ENCODE measurements at regions of chr6 and their contacts with region 1.

Region 1: GRCh38 chr6:36094753-36095496 is 35.4 kb upstream of the MAPK13 start:
- DNase-seq: peak; percentile 59 to 89 (median 82)
- ATAC-seq: peak; percentile 71
- H3K4me3 ChIP-seq: no peak overlapping the region
- H3K4me3 Mint-ChIP-seq: no peak overlapping the region
- H3K27ac ChIP-seq: peak overlapping the region in 1 of 2 experiments; percentile 42
- H3K27ac Mint-ChIP-seq: peak overlapping the region; percentile 67
- H3K4me1 ChIP-seq: peaks cover 27% of the 10 kb centered on the region
- H3K4me1 Mint-ChIP-seq: peaks cover 33% of the 10 kb centered on the region
- H3K27me3 ChIP-seq: no peaks in the 10 kb centered on the region
- H3K27me3 Mint-ChIP-seq: no peaks in the 10 kb centered on the region
- CTCF ChIP-seq: peak; percentile 98

Region 2: DNA sequence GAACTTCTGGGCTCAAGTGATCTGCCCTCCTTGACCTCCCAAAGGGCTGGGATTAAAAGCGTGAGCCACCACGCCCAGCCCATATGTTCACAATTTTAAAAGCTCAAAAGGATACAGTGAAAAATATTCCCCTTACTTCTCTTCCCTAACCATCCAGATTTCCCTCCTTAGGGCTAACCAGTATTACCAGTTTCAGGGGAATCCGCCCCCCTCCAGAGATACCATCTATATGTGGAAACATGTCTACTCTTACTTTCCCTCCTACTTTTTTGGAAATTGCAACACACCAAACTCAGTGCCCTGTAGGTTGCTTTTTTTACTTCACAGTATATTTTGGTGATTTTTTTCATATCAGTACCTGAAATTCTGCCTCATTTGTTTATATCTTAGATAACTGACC is 633.7 kb before region 1 on chr6:
- CTCF ChIA-PET with region 1: no interaction called
- POLR2A ChIA-PET with region 1: no interaction called
- intact Hi-C with region 1: no loop called
- DNase-seq: no peak
- ATAC-seq: no peak
- H3K4me3 ChIP-seq: no peak overlapping the region
- H3K4me3 Mint-ChIP-seq: no peak overlapping the region
- H3K27ac ChIP-seq: no peak overlapping the region
- H3K27ac Mint-ChIP-seq: no peak overlapping the region
- H3K4me1 ChIP-seq: no peaks in the 10 kb centered on the region
- H3K4me1 Mint-ChIP-seq: no peaks in the 10 kb centered on the region
- H3K27me3 ChIP-seq: no peaks in the 10 kb centered on the region
- H3K27me3 Mint-ChIP-seq: no peaks in the 10 kb centered on the region
- CTCF ChIP-seq: no peak

Region 3: DNA sequence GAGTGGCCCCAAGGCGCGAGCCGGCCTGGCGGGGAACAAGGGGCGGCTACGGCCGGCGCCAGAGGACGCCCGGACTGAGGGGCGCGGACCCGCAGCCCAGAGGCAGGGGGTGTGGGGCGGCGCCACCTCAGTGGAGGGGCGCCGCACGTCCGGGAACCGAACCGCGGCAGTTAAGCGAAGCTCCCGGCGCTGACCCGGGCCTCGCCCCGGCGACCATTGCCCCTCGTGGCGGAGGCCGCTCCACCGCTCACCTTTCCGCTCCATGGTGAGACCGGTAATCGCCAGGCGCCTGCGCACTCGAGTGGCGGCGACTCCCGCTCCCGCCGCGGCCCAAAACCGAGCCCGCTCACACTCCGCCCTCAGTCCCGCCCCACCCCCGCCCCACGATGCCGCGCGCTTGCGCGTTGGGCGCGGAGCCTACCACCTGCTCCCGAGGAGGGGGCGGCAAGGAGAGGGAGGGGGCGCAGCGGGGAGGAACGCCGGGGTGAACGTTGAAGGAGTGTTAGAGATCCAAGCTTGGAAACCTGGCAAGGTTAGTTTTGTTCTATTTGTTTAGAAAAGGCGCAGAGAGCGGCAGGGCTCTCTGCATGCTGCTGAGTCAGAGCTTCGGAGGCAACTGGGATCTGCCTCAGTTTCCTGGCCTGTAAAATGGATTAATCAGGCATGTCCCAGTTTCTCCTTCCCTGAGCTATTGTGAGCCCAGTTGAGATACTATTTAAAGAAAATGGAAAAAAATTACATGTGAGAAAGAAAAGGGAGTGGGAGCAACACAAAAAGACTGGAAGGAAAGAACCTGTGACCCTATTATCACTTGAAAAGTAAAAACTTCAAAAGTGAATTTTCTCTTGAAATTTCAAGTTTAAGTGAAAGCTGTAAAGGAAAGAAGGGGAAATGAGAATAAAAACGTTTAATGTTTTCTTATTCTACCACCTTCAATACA is 173.9 kb before region 1 on chr6 and contains the start of gene SRPK1:
- CTCF ChIA-PET with region 1: no interaction called
- POLR2A ChIA-PET with region 1: no interaction called
- intact Hi-C with region 1: loop called in 1 of 2 experiments (anchors 1 kb)
- DNase-seq: peak; percentile 66 to 90 (median 81)
- ATAC-seq: peak; percentile 76
- H3K4me3 ChIP-seq: peak within 1 kb of the TSS; percentile 63 to 67
- H3K4me3 Mint-ChIP-seq: peak within 1 kb of the TSS; percentile 96
- H3K27ac ChIP-seq: peak within 1 kb of the TSS; percentile 42 to 62
- H3K27ac Mint-ChIP-seq: peak within 1 kb of the TSS; percentile 93
- H3K4me1 ChIP-seq: peaks cover 19% of the 10 kb centered on the region
- H3K4me1 Mint-ChIP-seq: peaks cover 41% of the 10 kb centered on the region
- H3K27me3 ChIP-seq: no peaks in the 10 kb centered on the region
- H3K27me3 Mint-ChIP-seq: no peaks in the 10 kb centered on the region
- CTCF ChIP-seq: no peak
- total RNA-seq, gene SRPK1: 21.0 to 22.7 TPM

Region 4: DNA sequence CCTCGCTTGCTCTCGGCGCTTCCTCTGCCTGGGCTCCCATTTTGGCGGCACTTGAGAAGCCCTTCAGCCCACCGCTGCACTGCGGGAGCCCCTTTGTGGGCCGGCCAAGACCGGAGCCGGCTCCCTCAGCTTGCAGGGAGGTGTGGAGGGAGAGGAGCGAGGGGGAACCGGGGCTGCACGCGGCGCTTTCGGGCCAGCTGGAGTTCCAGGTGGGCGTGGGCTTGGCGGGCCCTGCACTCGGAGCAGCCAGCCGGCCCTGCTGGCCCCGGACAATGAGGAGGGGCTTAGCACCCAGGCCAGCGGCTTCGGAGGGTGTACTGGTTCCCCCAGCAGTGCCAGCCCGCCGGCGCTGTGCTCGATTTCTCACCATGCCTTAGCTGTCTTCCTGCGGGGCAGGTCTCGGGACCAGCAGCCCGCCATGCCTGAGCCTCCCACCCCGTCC is 163.8 kb before region 1 on chr6:
- CTCF ChIA-PET with region 1: no interaction called
- POLR2A ChIA-PET with region 1: no interaction called
- intact Hi-C with region 1: no loop called
- DNase-seq: no peak
- ATAC-seq: no peak
- H3K4me3 ChIP-seq: no peak overlapping the region
- H3K4me3 Mint-ChIP-seq: no peak overlapping the region
- H3K27ac ChIP-seq: no peak overlapping the region
- H3K27ac Mint-ChIP-seq: no peak overlapping the region
- H3K4me1 ChIP-seq: no peaks in the 10 kb centered on the region
- H3K4me1 Mint-ChIP-seq: peaks cover 2% of the 10 kb centered on the region
- H3K27me3 ChIP-seq: no peaks in the 10 kb centered on the region
- H3K27me3 Mint-ChIP-seq: no peaks in the 10 kb centered on the region
- CTCF ChIP-seq: no peak

Region 5: GRCh38 chr6:36075656-36076055 is 19.3 kb before region 1 on chr6:
- CTCF ChIA-PET with region 1: interaction called, 32 read pairs
- POLR2A ChIA-PET with region 1: interaction called, 3 read pairs
- intact Hi-C with region 1: loop called in 1 of 2 experiments (anchors 2 kb)
- DNase-seq: peak in 4 of 9 experiments; percentile 25 to 50 (median 36)
- ATAC-seq: peak; percentile 51
- H3K4me3 ChIP-seq: no peak overlapping the region
- H3K4me3 Mint-ChIP-seq: no peak overlapping the region
- H3K27ac ChIP-seq: no peak overlapping the region
- H3K27ac Mint-ChIP-seq: peak overlapping the region; percentile 52
- H3K4me1 ChIP-seq: no peaks in the 10 kb centered on the region
- H3K4me1 Mint-ChIP-seq: peaks cover 16% of the 10 kb centered on the region
- H3K27me3 ChIP-seq: no peaks in the 10 kb centered on the region
- H3K27me3 Mint-ChIP-seq: no peaks in the 10 kb centered on the region
- CTCF ChIP-seq: peak; percentile 45

Region 6: DNA sequence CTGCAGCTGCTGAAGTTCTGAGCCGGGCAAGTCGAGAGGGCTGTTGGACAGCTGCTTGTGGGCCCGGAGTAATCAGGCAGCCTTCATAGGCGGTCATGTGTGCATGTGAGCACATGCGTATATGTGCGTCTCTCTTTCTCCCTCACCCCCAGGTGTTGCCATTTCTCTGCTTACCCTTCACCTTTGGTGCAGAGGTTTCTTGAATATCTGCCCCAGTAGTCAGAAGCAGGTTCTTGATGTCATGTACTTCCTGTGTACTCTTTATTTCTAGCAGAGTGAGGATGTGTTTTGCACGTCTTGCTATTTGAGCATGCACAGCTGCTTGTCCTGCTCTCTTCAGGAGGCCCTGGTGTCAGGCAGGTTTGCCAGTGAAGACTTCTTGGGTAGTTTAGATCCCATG is 14.2 kb after region 1 on chr6:
- CTCF ChIA-PET with region 1: interaction called, 64 read pairs
- POLR2A ChIA-PET with region 1: interaction called, 20 read pairs
- intact Hi-C with region 1: loop called in 1 of 2 experiments (anchors 1 kb)
- DNase-seq: peak in 5 of 9 experiments; percentile 44 to 81 (median 66)
- ATAC-seq: peak; percentile 93
- H3K4me3 ChIP-seq: no peak overlapping the region
- H3K4me3 Mint-ChIP-seq: peak overlapping the region; percentile 8
- H3K27ac ChIP-seq: peak overlapping the region; percentile 59 to 60
- H3K27ac Mint-ChIP-seq: peak overlapping the region; percentile 95
- H3K4me1 ChIP-seq: peaks cover 53% of the 10 kb centered on the region
- H3K4me1 Mint-ChIP-seq: peaks cover 60% of the 10 kb centered on the region
- H3K27me3 ChIP-seq: no peaks in the 10 kb centered on the region
- H3K27me3 Mint-ChIP-seq: no peaks in the 10 kb centered on the region
- CTCF ChIP-seq: no peak

Region 7: GRCh38 chr6:36131511-36132245 is 36.8 kb after region 1 on chr6:
- CTCF ChIA-PET with region 1: interaction called, 88 read pairs
- POLR2A ChIA-PET with region 1: interaction called, 15 read pairs
- intact Hi-C with region 1: loop called in 1 of 2 experiments (anchors 5 kb)
- DNase-seq: peak in 8 of 9 experiments; percentile 22 to 78 (median 48)
- ATAC-seq: peak; percentile 71
- H3K4me3 ChIP-seq: peak overlapping the region; percentile 79 to 89
- H3K4me3 Mint-ChIP-seq: peak overlapping the region; percentile 88
- H3K27ac ChIP-seq: peak overlapping the region; percentile 81 to 92
- H3K27ac Mint-ChIP-seq: peak overlapping the region; percentile 95
- H3K4me1 ChIP-seq: peaks cover 48% of the 10 kb centered on the region
- H3K4me1 Mint-ChIP-seq: peaks cover 54% of the 10 kb centered on the region
- H3K27me3 ChIP-seq: no peaks in the 10 kb centered on the region
- H3K27me3 Mint-ChIP-seq: no peaks in the 10 kb centered on the region
- CTCF ChIP-seq: no peak

Region 8: DNA sequence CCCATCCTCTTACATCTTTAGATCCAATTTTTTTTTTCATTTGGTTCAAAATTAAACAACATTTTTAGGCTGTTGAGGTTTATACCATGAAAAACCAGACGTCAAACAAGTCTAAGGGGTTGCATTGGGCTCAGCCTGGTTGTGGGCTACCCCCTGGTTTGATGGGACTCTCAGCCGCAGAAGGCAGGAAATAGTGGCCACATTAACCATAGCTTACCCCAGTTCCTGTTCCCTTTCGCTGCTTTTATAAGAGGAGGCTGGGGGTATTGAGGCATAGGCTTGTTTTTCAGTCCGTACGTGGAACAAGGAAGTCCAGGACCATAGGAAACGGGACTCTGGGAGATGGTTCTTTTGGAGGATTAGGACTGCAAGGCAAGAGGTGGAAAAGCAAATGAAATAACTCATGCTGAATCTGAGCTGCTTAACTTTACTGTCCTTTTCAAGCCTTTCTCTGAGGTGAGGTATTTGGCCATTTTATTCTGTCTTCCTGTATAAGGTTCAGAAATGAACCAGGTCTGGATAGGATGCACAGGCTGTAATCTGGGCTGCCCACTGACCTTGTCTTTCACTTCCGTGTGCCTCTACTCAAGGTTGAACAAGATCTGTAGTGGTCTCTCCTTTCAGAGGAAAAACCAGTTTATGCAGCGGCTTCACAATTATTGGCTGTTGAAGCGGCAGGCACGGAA is 109.3 kb after region 1 on chr6:
- CTCF ChIA-PET with region 1: interaction called, 16 read pairs
- POLR2A ChIA-PET with region 1: interaction called, 4 read pairs
- intact Hi-C with region 1: no loop called
- DNase-seq: peak; percentile 27 to 90 (median 59)
- ATAC-seq: peak; percentile 97
- H3K4me3 ChIP-seq: peak overlapping the region in 1 of 2 experiments; percentile 9
- H3K4me3 Mint-ChIP-seq: peak overlapping the region; percentile 74
- H3K27ac ChIP-seq: no peak overlapping the region
- H3K27ac Mint-ChIP-seq: peak overlapping the region; percentile 63
- H3K4me1 ChIP-seq: peaks cover 55% of the 10 kb centered on the region
- H3K4me1 Mint-ChIP-seq: peaks cover 72% of the 10 kb centered on the region
- H3K27me3 ChIP-seq: no peaks in the 10 kb centered on the region
- H3K27me3 Mint-ChIP-seq: no peaks in the 10 kb centered on the region
- CTCF ChIP-seq: no peak